ENCODE measurements at regions of chr15 and their contacts with region 1.

Region 1: GRCh38 chr15:76987926-76988860 is 6.7 kb upstream of the PSTPIP1 start:
- DNase-seq: peak; percentile 76
- H3K4me3 Mint-ChIP-seq: peak overlapping the region; percentile 73
- H3K27ac Mint-ChIP-seq: peak overlapping the region; percentile 99
- H3K4me1 Mint-ChIP-seq: peaks cover 90% of the 10 kb centered on the region
- H3K27me3 Mint-ChIP-seq: no peaks in the 10 kb centered on the region

Region 2: GRCh38 chr15:76181705-76182107 is 806.5 kb before region 1 on chr15:
- intact Hi-C with region 1: loop called (anchors 5 kb)
- DNase-seq: peak; percentile 33
- H3K4me3 Mint-ChIP-seq: peak overlapping the region; percentile 0
- H3K27ac Mint-ChIP-seq: peak overlapping the region; percentile 16
- H3K4me1 Mint-ChIP-seq: peaks cover 10% of the 10 kb centered on the region
- H3K27me3 Mint-ChIP-seq: peaks cover 40% of the 10 kb centered on the region

Region 3: GRCh38 chr15:76772776-76773175 is 215.4 kb before region 1 on chr15:
- intact Hi-C with region 1: no loop called
- DNase-seq: no peak
- H3K4me3 Mint-ChIP-seq: no peak overlapping the region
- H3K27ac Mint-ChIP-seq: no peak overlapping the region
- H3K4me1 Mint-ChIP-seq: peaks cover 8% of the 10 kb centered on the region
- H3K27me3 Mint-ChIP-seq: no peaks in the 10 kb centered on the region

Region 4: DNA sequence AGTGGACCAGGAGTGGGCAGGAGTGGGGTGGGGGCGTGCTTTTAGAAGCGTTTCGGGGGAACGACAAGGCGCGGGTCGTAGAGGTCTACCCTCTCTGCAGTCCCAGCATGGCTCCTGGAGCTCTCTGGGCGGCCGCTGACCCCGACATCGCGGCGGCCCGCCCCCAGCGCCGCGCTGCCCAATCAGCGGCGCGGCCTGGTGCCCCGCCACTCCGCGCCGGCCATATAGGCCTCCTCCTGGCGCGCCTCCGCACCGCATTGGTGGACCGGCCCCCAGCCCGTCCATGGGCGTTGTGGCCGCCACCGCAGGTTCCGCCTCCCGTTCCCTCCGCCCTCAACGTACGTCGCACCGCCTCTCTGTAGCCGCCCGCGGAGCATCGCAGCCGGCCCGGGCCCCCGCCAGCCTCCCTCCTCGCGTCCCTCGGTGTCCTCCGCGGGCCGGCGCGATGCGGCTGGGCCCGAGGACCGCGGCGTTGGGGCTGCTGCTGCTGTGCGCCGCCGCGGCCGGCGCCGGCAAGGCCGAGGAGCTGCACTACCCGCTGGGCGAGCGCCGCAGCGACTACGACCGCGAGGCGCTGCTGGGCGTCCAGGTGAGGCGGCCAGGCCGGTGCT is 56.7 kb before region 1 on chr15 and contains the start of gene RCN2:
- intact Hi-C with region 1: loop called (anchors 1 kb)
- DNase-seq: peak; percentile 93
- H3K4me3 Mint-ChIP-seq: peak within 1 kb of the TSS; percentile 92
- H3K27ac Mint-ChIP-seq: peak within 1 kb of the TSS; percentile 84
- H3K4me1 Mint-ChIP-seq: peaks cover 44% of the 10 kb centered on the region
- H3K27me3 Mint-ChIP-seq: peaks cover 5% of the 10 kb centered on the region
- total RNA-seq, gene RCN2: 39.9 and 42.2 TPM in 2 replicates

Region 5: GRCh38 chr15:77024271-77025082 is 36.3 kb after region 1 on chr15:
- intact Hi-C with region 1: loop called (anchors 1 kb)
- DNase-seq: peak; percentile 49
- H3K4me3 Mint-ChIP-seq: peak overlapping the region; percentile 33
- H3K27ac Mint-ChIP-seq: peak overlapping the region; percentile 98
- H3K4me1 Mint-ChIP-seq: peaks cover 61% of the 10 kb centered on the region
- H3K27me3 Mint-ChIP-seq: no peaks in the 10 kb centered on the region

Region 6: DNA sequence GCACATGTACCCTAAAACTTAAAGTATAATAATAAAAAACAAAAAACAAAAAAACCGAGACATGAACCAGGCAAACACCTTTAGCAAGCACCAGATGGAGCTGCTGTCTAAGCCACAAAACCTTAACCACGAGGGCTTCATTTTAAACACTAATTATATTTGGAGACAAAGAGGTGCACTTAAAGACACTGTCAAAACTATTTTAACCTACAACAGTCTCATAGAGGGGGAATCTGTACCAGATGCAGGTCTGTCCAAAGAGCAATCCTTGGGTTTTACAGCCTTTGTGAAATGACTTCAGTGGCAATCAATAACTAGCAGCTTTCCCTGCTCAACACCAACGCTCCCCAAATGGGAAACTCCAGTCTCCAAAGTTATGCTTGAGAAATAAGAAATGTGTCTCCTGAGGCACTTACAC is 198.4 kb after region 1 on chr15:
- intact Hi-C with region 1: loop called (anchors 5 kb)
- DNase-seq: no peak
- H3K4me3 Mint-ChIP-seq: no peak overlapping the region
- H3K27ac Mint-ChIP-seq: peak overlapping the region; percentile 37
- H3K4me1 Mint-ChIP-seq: peaks cover 69% of the 10 kb centered on the region
- H3K27me3 Mint-ChIP-seq: no peaks in the 10 kb centered on the region